ENCODE measurements at regions of chr11 and their contacts with region 1.

Region 1: GRCh38 chr11:34357701-34358257 is at the start of gene ABTB2:
- DNase-seq: peak; percentile 92 to 98 (median 96)
- ATAC-seq: peak; percentile 89
- H3K4me3 ChIP-seq: peak within 1 kb of the TSS; percentile 75
- H3K4me3 Mint-ChIP-seq: peak within 1 kb of the TSS; percentile 91
- H3K27ac ChIP-seq: peak within 1 kb of the TSS; percentile 28 to 36
- H3K27ac Mint-ChIP-seq: peak within 1 kb of the TSS; percentile 42
- H3K4me1 ChIP-seq: peaks cover 31% of the 10 kb centered on the region
- H3K4me1 Mint-ChIP-seq: peaks cover 14% of the 10 kb centered on the region
- H3K27me3 ChIP-seq: peaks cover 18 to 38% of the 10 kb centered on the region in 2 experiments
- H3K27me3 Mint-ChIP-seq: peaks cover 53% of the 10 kb centered on the region
- CTCF ChIP-seq: no peak
- total RNA-seq, gene ABTB2: 0.88 to 1.0 TPM

Region 2: GRCh38 chr11:33161120-33162005 is 1196.4 kb before region 1 on chr11 and contains the start of gene CSTF3:
- CTCF ChIA-PET with region 1: no interaction called
- POLR2A ChIA-PET with region 1: no interaction called
- intact Hi-C with region 1: loop called in 1 of 2 experiments (anchors 5 kb)
- DNase-seq: peak; percentile 87 to 98 (median 94)
- ATAC-seq: peak; percentile 94
- H3K4me3 ChIP-seq: peak within 1 kb of the TSS; percentile 99
- H3K4me3 Mint-ChIP-seq: peak within 1 kb of the TSS; percentile 99
- H3K27ac ChIP-seq: peak within 1 kb of the TSS; percentile 66 to 71
- H3K27ac Mint-ChIP-seq: peak within 1 kb of the TSS; percentile 92
- H3K4me1 ChIP-seq: peaks cover 19% of the 10 kb centered on the region
- H3K4me1 Mint-ChIP-seq: peaks cover 61% of the 10 kb centered on the region
- H3K27me3 ChIP-seq: no peaks in the 10 kb centered on the region
- H3K27me3 Mint-ChIP-seq: no peaks in the 10 kb centered on the region
- CTCF ChIP-seq: peak; percentile 47
- total RNA-seq, gene CSTF3: 6.4 to 9.9 TPM

Region 3: DNA sequence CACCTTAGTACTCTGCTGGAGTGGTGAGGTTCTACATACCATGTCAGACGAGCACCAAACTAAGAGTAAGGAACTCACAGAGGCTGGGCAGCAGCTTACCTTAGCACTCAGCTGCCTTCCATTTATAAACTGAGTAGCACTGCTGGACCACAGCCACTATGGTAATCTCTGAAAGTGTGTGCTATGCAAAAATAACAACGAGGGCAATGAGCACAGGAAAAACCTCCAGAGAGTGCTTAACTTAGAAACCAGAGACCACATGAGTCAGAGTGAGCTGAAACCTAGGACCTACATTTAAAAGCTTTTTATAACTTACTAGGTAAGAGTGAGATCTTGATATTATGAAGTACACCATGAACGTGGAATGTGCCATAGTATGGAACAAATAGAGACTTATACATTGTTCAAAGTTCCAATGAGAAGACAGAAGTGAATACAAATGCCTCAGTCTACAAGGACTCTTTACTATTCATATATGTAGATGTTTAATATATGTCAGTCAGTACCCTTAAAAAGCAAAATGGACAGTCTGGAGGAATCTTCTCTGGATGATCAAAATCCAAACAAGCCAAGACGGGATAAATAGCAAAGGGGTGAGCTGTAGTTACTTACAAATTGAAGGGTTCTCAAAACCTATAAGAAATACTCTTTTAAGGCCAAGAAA is 604.3 kb before region 1 on chr11:
- CTCF ChIA-PET with region 1: no interaction called
- POLR2A ChIA-PET with region 1: no interaction called
- intact Hi-C with region 1: no loop called
- DNase-seq: no peak
- ATAC-seq: no peak
- H3K4me3 ChIP-seq: no peak overlapping the region
- H3K4me3 Mint-ChIP-seq: no peak overlapping the region
- H3K27ac ChIP-seq: no peak overlapping the region
- H3K27ac Mint-ChIP-seq: no peak overlapping the region
- H3K4me1 ChIP-seq: no peaks in the 10 kb centered on the region
- H3K4me1 Mint-ChIP-seq: no peaks in the 10 kb centered on the region
- H3K27me3 ChIP-seq: no peaks in the 10 kb centered on the region
- H3K27me3 Mint-ChIP-seq: no peaks in the 10 kb centered on the region
- CTCF ChIP-seq: no peak

Region 4: DNA sequence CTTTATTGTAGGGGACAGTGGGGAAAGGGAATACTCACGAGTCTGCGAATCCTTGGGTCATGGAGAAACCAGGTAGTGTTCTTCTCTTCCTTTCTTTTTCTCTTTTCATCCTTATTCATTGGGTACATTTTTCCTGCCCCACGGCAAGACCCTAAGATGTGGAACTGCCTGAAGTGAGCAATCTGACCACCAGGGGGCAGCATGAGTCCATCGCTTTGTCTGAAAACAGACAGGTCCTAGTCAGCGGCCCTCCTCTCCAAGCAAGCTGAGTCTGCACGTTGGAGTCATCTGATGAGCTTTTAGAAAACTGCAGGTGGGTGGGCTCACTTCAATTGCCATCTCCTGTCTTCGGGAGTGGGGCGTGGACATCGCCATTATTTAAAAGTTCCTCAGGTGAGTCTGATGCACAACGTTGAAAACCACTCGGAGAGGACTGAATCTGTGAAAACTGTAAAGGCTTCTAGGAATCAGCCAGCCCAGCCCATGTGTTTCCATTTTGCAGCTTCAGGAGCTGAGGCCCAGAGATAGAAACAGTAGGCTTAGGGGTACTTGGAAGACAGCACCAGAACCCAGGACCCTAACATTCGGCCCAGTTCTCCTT is 549.5 kb before region 1 on chr11:
- CTCF ChIA-PET with region 1: no interaction called
- POLR2A ChIA-PET with region 1: no interaction called
- intact Hi-C with region 1: loop called (anchors 1 to 2 kb)
- DNase-seq: peak; percentile 73 to 91 (median 81)
- ATAC-seq: peak; percentile 82
- H3K4me3 ChIP-seq: no peak overlapping the region
- H3K4me3 Mint-ChIP-seq: no peak overlapping the region
- H3K27ac ChIP-seq: no peak overlapping the region
- H3K27ac Mint-ChIP-seq: no peak overlapping the region
- H3K4me1 ChIP-seq: peaks cover 5% of the 10 kb centered on the region
- H3K4me1 Mint-ChIP-seq: no peaks in the 10 kb centered on the region
- H3K27me3 ChIP-seq: peaks cover 4 to 8% of the 10 kb centered on the region in 2 experiments
- H3K27me3 Mint-ChIP-seq: peaks cover 9% of the 10 kb centered on the region
- CTCF ChIP-seq: peak; percentile 88

Region 5: DNA sequence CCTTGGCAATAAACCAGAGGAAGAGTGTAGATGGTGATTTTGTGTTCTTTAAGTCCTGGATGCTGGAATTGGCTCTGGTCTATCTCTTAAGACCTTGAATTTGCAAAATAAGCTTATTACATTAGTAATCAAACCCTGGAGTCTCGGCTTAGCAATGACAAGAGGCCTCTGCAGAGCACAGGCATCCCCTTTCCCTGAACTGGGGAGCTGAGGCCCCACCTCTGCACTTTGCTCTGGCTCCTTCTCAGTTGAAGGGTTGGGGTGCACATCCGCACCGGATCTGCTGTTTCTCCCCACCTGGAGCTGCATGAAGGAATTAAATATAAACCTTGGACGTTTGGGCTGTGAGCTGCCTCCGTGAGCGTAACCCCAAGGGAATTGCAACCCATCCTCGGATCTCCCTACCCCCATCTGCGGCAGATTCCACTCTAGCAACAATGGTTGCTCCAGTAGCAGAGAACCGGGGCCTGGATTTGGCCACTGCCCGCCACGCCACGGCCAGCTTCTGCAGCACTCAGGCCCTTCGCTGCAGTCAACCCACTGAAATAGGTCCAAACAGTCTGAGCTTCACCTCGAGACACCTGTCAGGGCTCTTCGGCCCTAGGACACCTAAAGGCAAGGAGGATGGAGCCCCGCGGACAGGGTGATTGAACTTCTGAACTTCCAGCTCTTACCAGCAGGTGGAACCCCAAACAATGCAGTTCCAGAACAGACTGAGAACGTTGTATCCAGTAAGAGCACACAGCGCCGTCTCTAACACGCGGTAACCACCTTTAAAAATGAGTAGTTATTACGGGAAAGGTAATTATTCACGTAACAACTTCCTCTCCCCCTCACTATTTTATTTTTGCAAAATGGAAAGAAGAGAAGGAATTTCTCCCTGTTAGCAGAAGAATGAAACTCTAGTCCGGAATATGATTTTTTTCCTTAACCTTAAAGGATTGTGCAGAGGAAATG is 361.0 kb before region 1 on chr11:
- CTCF ChIA-PET with region 1: interaction called, 11 read pairs
- POLR2A ChIA-PET with region 1: interaction called, 4 read pairs
- intact Hi-C with region 1: loop called (anchors 1 kb)
- DNase-seq: peak; percentile 53 to 85 (median 66)
- ATAC-seq: peak; percentile 100
- H3K4me3 ChIP-seq: no peak overlapping the region
- H3K4me3 Mint-ChIP-seq: peak overlapping the region; percentile 55
- H3K27ac ChIP-seq: no peak overlapping the region
- H3K27ac Mint-ChIP-seq: no peak overlapping the region
- H3K4me1 ChIP-seq: peaks cover 7% of the 10 kb centered on the region
- H3K4me1 Mint-ChIP-seq: peaks cover 7% of the 10 kb centered on the region
- H3K27me3 ChIP-seq: no peaks in the 10 kb centered on the region
- H3K27me3 Mint-ChIP-seq: peaks cover 23% of the 10 kb centered on the region
- CTCF ChIP-seq: peak; percentile 76

Region 6: GRCh38 chr11:34105079-34105956 is 252.5 kb before region 1 on chr11 and contains the start of gene NAT10:
- CTCF ChIA-PET with region 1: no interaction called
- POLR2A ChIA-PET with region 1: interaction called, 24 read pairs
- intact Hi-C with region 1: loop called (anchors 1 to 5 kb)
- DNase-seq: peak; percentile 94 to 100 (median 97)
- ATAC-seq: peak; percentile 90
- H3K4me3 ChIP-seq: peak within 1 kb of the TSS; percentile 81
- H3K4me3 Mint-ChIP-seq: peak within 1 kb of the TSS; percentile 95
- H3K27ac ChIP-seq: peak within 1 kb of the TSS; percentile 91 to 95
- H3K27ac Mint-ChIP-seq: peak within 1 kb of the TSS; percentile 99
- H3K4me1 ChIP-seq: peaks cover 31% of the 10 kb centered on the region
- H3K4me1 Mint-ChIP-seq: peaks cover 69% of the 10 kb centered on the region
- H3K27me3 ChIP-seq: no peaks in the 10 kb centered on the region
- H3K27me3 Mint-ChIP-seq: peaks cover 4% of the 10 kb centered on the region
- CTCF ChIP-seq: no peak
- total RNA-seq, gene NAT10: 50.1 to 55.6 TPM

Region 7: GRCh38 chr11:34234086-34234740 is 123.6 kb before region 1 on chr11:
- CTCF ChIA-PET with region 1: no interaction called
- POLR2A ChIA-PET with region 1: interaction called, 4 read pairs
- intact Hi-C with region 1: loop called in 1 of 2 experiments (anchors 1 kb)
- DNase-seq: peak; percentile 37 to 93 (median 72)
- ATAC-seq: peak; percentile 99
- H3K4me3 ChIP-seq: no peak overlapping the region
- H3K4me3 Mint-ChIP-seq: no peak overlapping the region
- H3K27ac ChIP-seq: no peak overlapping the region
- H3K27ac Mint-ChIP-seq: peak overlapping the region; percentile 42
- H3K4me1 ChIP-seq: peaks cover 21% of the 10 kb centered on the region
- H3K4me1 Mint-ChIP-seq: peaks cover 19% of the 10 kb centered on the region
- H3K27me3 ChIP-seq: no peaks in the 10 kb centered on the region
- H3K27me3 Mint-ChIP-seq: no peaks in the 10 kb centered on the region
- CTCF ChIP-seq: no peak

Region 8: GRCh38 chr11:34438529-34439507 is 81.0 kb after region 1 on chr11 and contains the start of gene CAT:
- CTCF ChIA-PET with region 1: no interaction called
- POLR2A ChIA-PET with region 1: interaction called, 5 read pairs
- intact Hi-C with region 1: loop called in 1 of 2 experiments (anchors 2 kb)
- DNase-seq: peak; percentile 93 to 98 (median 98)
- ATAC-seq: peak; percentile 95
- H3K4me3 ChIP-seq: peak within 1 kb of the TSS; percentile 81
- H3K4me3 Mint-ChIP-seq: peak within 1 kb of the TSS; percentile 93
- H3K27ac ChIP-seq: peak within 1 kb of the TSS; percentile 57 to 77
- H3K27ac Mint-ChIP-seq: peak within 1 kb of the TSS; percentile 88
- H3K4me1 ChIP-seq: peaks cover 22% of the 10 kb centered on the region
- H3K4me1 Mint-ChIP-seq: peaks cover 47% of the 10 kb centered on the region
- H3K27me3 ChIP-seq: no peaks in the 10 kb centered on the region
- H3K27me3 Mint-ChIP-seq: no peaks in the 10 kb centered on the region
- CTCF ChIP-seq: no peak
- total RNA-seq, gene CAT: 8.5 to 9.8 TPM

Measured in CD4-positive, alpha-beta T cell (primary cell).